Naive thymus-derived CD4-positive, alpha-beta T cell (primary cell): ENCODE measurements at regions of chr5 and their contacts with region 1.

Region 1: DNA sequence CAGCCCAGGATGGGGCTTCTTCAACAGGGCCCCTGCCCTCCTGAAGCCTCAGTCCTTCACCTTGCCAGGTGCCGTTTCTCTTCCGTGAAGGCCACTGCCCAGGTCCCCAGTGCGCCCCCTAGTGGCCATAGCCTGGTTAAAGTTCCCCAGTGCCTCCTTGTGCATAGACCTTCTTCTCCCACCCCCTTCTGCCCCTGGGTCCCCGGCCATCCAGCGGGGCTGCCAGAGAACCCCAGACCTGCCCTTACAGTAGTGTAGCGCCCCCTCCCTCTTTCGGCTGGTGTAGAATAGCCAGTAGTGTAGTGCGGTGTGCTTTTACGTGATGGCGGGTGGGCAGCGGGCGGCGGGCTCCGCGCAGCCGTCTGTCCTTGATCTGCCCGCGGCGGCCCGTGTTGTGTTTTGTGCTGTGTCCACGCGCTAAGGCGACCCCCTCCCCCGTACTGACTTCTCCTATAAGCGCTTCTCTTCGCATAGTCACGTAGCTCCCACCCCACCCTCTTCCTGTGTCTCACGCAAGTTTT is 23.6 kb downstream of the PCDHGC5 start:
- DNase-seq: peak; percentile 48 to 87 (median 74)
- ATAC-seq: peak; percentile 79
- H3K4me3 ChIP-seq: peak overlapping the region; percentile 59
- H3K4me3 Mint-ChIP-seq: peak overlapping the region; percentile 84 to 97 (median 90)
- H3K27ac ChIP-seq: peak overlapping the region; percentile 39
- H3K27ac Mint-ChIP-seq: peak overlapping the region; percentile 27 to 83 (median 58)
- H3K4me1 ChIP-seq: peaks cover 0 to 13% of the 10 kb centered on the region in 2 donors
- H3K4me1 Mint-ChIP-seq: peaks cover 21 to 35% (median 26%) of the 10 kb centered on the region in 7 donors
- H3K27me3 ChIP-seq: no peaks in the 10 kb centered on the region
- H3K27me3 Mint-ChIP-seq: peaks cover 0 to 3% (median 0%) of the 10 kb centered on the region in 5 donors

Region 2: GRCh38 chr5:141084487-141084990 is 427.9 kb before region 1 on chr5:
- CTCF ChIA-PET with region 1: no interaction called
- POLR2A ChIA-PET with region 1: no interaction called
- intact Hi-C with region 1: loop called in 1 of 2 experiments (anchors 1 kb)
- DNase-seq: peak in 7 of 9 donors; percentile 17 to 55 (median 31)
- ATAC-seq: peak; percentile 82
- H3K4me3 ChIP-seq: peak overlapping the region; percentile 40
- H3K4me3 Mint-ChIP-seq: peak overlapping the region; percentile 77 to 95 (median 90)
- H3K27ac ChIP-seq: no peak overlapping the region
- H3K27ac Mint-ChIP-seq: peak overlapping the region in 6 of 9 donors; percentile 48 to 90 (median 80)
- H3K4me1 ChIP-seq: no peaks in the 10 kb centered on the region
- H3K4me1 Mint-ChIP-seq: peaks cover 0 to 13% (median 8%) of the 10 kb centered on the region in 7 donors
- H3K27me3 ChIP-seq: no peaks in the 10 kb centered on the region
- H3K27me3 Mint-ChIP-seq: peaks cover 6 to 64% (median 34%) of the 10 kb centered on the region in 5 donors

Region 3: DNA sequence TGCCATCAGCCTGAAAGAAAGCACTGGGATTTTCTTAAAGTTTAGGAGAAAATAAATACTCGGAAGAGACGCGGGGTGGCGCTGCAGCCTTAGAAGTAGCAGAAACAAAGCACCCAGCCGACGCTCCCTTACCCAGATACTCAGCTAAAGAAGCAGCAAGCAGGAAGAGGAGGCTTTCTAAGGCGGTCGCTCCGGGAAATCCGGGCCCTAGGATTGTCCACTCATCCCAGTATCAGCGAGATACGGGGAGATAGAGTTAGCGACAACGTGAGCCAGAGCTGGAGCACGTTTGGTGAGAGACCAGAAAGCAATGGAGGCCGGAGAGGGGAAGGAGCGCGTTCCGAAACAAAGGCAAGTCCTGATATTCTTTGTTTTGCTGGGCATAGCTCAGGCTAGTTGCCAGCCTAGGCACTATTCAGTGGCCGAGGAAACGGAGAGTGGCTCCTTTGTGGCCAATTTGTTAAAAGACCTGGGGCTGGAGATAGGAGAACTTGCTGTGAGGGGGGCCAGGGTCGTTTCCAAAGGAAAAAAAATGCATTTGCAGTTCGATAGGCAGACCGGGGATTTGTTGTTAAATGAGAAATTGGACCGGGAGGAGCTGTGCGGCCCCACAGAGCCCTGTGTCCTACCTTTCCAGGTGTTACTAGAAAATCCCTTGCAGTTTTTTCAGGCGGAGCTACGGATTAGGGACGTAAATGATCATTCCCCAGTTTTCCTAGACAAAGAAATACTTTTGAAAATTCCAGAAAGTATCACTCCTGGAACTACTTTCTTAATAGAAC is 417.8 kb before region 1 on chr5 and contains the start of gene PCDHB2:
- CTCF ChIA-PET with region 1: no interaction called
- POLR2A ChIA-PET with region 1: no interaction called
- intact Hi-C with region 1: no loop called
- DNase-seq: no peak
- ATAC-seq: no peak
- H3K4me3 ChIP-seq: no peak within 1 kb of the TSS
- H3K4me3 Mint-ChIP-seq: peak within 1 kb of the TSS in 6 of 10 donors; percentile 10 to 69 (median 44)
- H3K27ac ChIP-seq: no peak within 1 kb of the TSS
- H3K27ac Mint-ChIP-seq: peak within 1 kb of the TSS in 1 of 9 donors; percentile 63
- H3K4me1 ChIP-seq: no peaks in the 10 kb centered on the region
- H3K4me1 Mint-ChIP-seq: peaks cover 0 to 6% (median 0%) of the 10 kb centered on the region in 7 donors
- H3K27me3 ChIP-seq: no peaks in the 10 kb centered on the region
- H3K27me3 Mint-ChIP-seq: peaks cover 0 to 68% (median 52%) of the 10 kb centered on the region in 5 donors
- total RNA-seq, gene PCDHB2: 0.34 to 0.97 (median 0.72) TPM in 4 of 5 experiments, not detected in the other

Region 4: GRCh38 chr5:141269195-141269594 is 243.3 kb before region 1 on chr5:
- CTCF ChIA-PET with region 1: no interaction called
- POLR2A ChIA-PET with region 1: no interaction called
- intact Hi-C with region 1: no loop called
- DNase-seq: no peak
- ATAC-seq: no peak
- H3K4me3 ChIP-seq: no peak overlapping the region
- H3K4me3 Mint-ChIP-seq: no peak overlapping the region
- H3K27ac ChIP-seq: no peak overlapping the region
- H3K27ac Mint-ChIP-seq: no peak overlapping the region
- H3K4me1 ChIP-seq: no peaks in the 10 kb centered on the region
- H3K4me1 Mint-ChIP-seq: no peaks in the 10 kb centered on the region
- H3K27me3 ChIP-seq: no peaks in the 10 kb centered on the region
- H3K27me3 Mint-ChIP-seq: no peaks in the 10 kb centered on the region

Region 5: GRCh38 chr5:141359790-141360426 is 152.5 kb before region 1 on chr5 and contains the start of gene PCDHGB2:
- CTCF ChIA-PET with region 1: no interaction called
- POLR2A ChIA-PET with region 1: no interaction called
- intact Hi-C with region 1: loop called in 1 of 2 experiments (anchors 5 kb)
- DNase-seq: peak in 1 of 9 donors; percentile 22
- ATAC-seq: peak; percentile 54
- H3K4me3 ChIP-seq: peak within 1 kb of the TSS; percentile 43
- H3K4me3 Mint-ChIP-seq: peak within 1 kb of the TSS; percentile 33 to 87 (median 78)
- H3K27ac ChIP-seq: no peak within 1 kb of the TSS
- H3K27ac Mint-ChIP-seq: peak within 1 kb of the TSS in 3 of 9 donors; percentile 48 to 57 (median 56)
- H3K4me1 ChIP-seq: no peaks in the 10 kb centered on the region
- H3K4me1 Mint-ChIP-seq: peaks cover 0 to 6% (median 3%) of the 10 kb centered on the region in 7 donors
- H3K27me3 ChIP-seq: peaks cover 5 to 19% of the 10 kb centered on the region in 2 donors
- H3K27me3 Mint-ChIP-seq: peaks cover 37 to 90% (median 87%) of the 10 kb centered on the region in 5 donors
- total RNA-seq, gene PCDHGB2: 0.24 to 1.3 (median 0.36) TPM in 4 of 5 experiments, not detected in the other

Region 6: GRCh38 chr5:141475625-141476131 is 36.8 kb before region 1 on chr5 and contains the start of gene PCDHGC3:
- CTCF ChIA-PET with region 1: no interaction called
- POLR2A ChIA-PET with region 1: no interaction called
- intact Hi-C with region 1: loop called in 1 of 2 experiments (anchors 5 kb)
- DNase-seq: peak in 2 of 9 donors; percentile 13 to 50
- ATAC-seq: peak; percentile 78
- H3K4me3 ChIP-seq: peak within 1 kb of the TSS; percentile 67
- H3K4me3 Mint-ChIP-seq: peak within 1 kb of the TSS; percentile 83 to 95 (median 91)
- H3K27ac ChIP-seq: no peak within 1 kb of the TSS
- H3K27ac Mint-ChIP-seq: peak within 1 kb of the TSS in 2 of 9 donors; percentile 21 to 87
- H3K4me1 ChIP-seq: peaks cover 5 to 13% of the 10 kb centered on the region in 2 donors
- H3K4me1 Mint-ChIP-seq: peaks cover 16 to 32% (median 29%) of the 10 kb centered on the region in 7 donors
- H3K27me3 ChIP-seq: peaks cover 3 to 13% of the 10 kb centered on the region in 2 donors
- H3K27me3 Mint-ChIP-seq: peaks cover 52 to 71% (median 55%) of the 10 kb centered on the region in 5 donors
- total RNA-seq, gene PCDHGC3: 0.15 to 0.76 (median 0.16) TPM

Region 7: GRCh38 chr5:141618804-141619554 is 106.5 kb after region 1 on chr5 and contains the start of gene DIAPH1:
- CTCF ChIA-PET with region 1: no interaction called
- POLR2A ChIA-PET with region 1: no interaction called
- intact Hi-C with region 1: loop called (anchors 5 kb)
- DNase-seq: peak; percentile 91 to 98 (median 96)
- ATAC-seq: peak; percentile 98
- H3K4me3 ChIP-seq: peak within 1 kb of the TSS; percentile 77
- H3K4me3 Mint-ChIP-seq: peak within 1 kb of the TSS; percentile 94 to 100 (median 100)
- H3K27ac ChIP-seq: peak within 1 kb of the TSS; percentile 97
- H3K27ac Mint-ChIP-seq: peak within 1 kb of the TSS; percentile 91 to 99 (median 95)
- H3K4me1 ChIP-seq: peaks cover 11 to 22% of the 10 kb centered on the region in 2 donors
- H3K4me1 Mint-ChIP-seq: peaks cover 44 to 61% (median 56%) of the 10 kb centered on the region in 7 donors
- H3K27me3 ChIP-seq: no peaks in the 10 kb centered on the region
- H3K27me3 Mint-ChIP-seq: no peaks in the 10 kb centered on the region
- total RNA-seq, gene DIAPH1: 163 to 278 (median 173) TPM